ENCODE measurements at regions of chr2 and their contacts with region 1.

Region 1: GRCh38 chr2:30421604-30422443 is 25.2 kb upstream of the LCLAT1 start:
- DNase-seq: no peak
- H3K4me3 ChIP-seq: no peak overlapping the region
- H3K27ac ChIP-seq: no peak overlapping the region
- H3K4me1 ChIP-seq: no peaks in the 10 kb centered on the region
- H3K27me3 ChIP-seq: no peaks in the 10 kb centered on the region
- CTCF ChIP-seq: no peak

Region 2: GRCh38 chr2:30262716-30263309 is 159.0 kb before region 1 on chr2:
- CTCF ChIA-PET with region 1: interaction called, 11 read pairs
- POLR2A ChIA-PET with region 1: no interaction called
- intact Hi-C with region 1: no loop called
- DNase-seq: no peak
- H3K4me3 ChIP-seq: no peak overlapping the region
- H3K27ac ChIP-seq: no peak overlapping the region
- H3K4me1 ChIP-seq: no peaks in the 10 kb centered on the region; the same call in 1 of the 2 replicates
- H3K27me3 ChIP-seq: no peaks in the 10 kb centered on the region
- CTCF ChIP-seq: no peak

Measured in PC-9 (cell line).